ENCODE measurements at regions of chr1 and their contacts with region 1.

Region 1: GRCh38 chr1:187051618-187052232 is 223.0 kb downstream of the PLA2G4A start:
- DNase-seq: peak; percentile 63
- H3K4me3 ChIP-seq: no peak overlapping the region
- H3K27ac ChIP-seq: no peak overlapping the region
- H3K4me1 ChIP-seq: peaks cover 7% of the 10 kb centered on the region
- CTCF ChIP-seq: peak; percentile 83

Region 2: GRCh38 chr1:187143783-187144182 is 92.1 kb after region 1 on chr1:
- CTCF ChIA-PET with region 1: no interaction called
- POLR2A ChIA-PET with region 1: no interaction called
- intact Hi-C with region 1: no loop called
- DNase-seq: no peak
- H3K4me3 ChIP-seq: no peak overlapping the region
- H3K27ac ChIP-seq: no peak overlapping the region
- H3K4me1 ChIP-seq: no peaks in the 10 kb centered on the region
- CTCF ChIP-seq: no peak

Region 3: GRCh38 chr1:187264995-187265602 is 213.4 kb after region 1 on chr1:
- CTCF ChIA-PET with region 1: no interaction called
- POLR2A ChIA-PET with region 1: no interaction called
- intact Hi-C with region 1: loop called (anchors 10 kb)
- DNase-seq: peak; percentile 7
- H3K4me3 ChIP-seq: no peak overlapping the region
- H3K27ac ChIP-seq: no peak overlapping the region
- H3K4me1 ChIP-seq: no peaks in the 10 kb centered on the region
- CTCF ChIP-seq: peak; percentile 65

Measured in OCI-LY7 (cell line).